Calu3 (cell line): ENCODE measurements at regions of chrX and their contacts with region 1.

Region 1: GRCh38 chrX:13223868-13224555 is 95.8 kb downstream of the ATXN3L start:
- DNase-seq: peak; percentile 50
- H3K4me3 Mint-ChIP-seq: peak overlapping the region; percentile 21
- H3K27ac Mint-ChIP-seq: peak overlapping the region; percentile 92
- H3K4me1 Mint-ChIP-seq: peaks cover 54% of the 10 kb centered on the region
- H3K27me3 Mint-ChIP-seq: no peaks in the 10 kb centered on the region
- CTCF ChIP-seq: no peak

Region 2: GRCh38 chrX:13101441-13102139 is 122.4 kb before region 1 on chrX:
- CTCF ChIA-PET with region 1: interaction called, 4 read pairs
- intact Hi-C with region 1: loop called (anchors 5 kb)
- DNase-seq: peak; percentile 78
- H3K4me3 Mint-ChIP-seq: peak overlapping the region; percentile 41
- H3K27ac Mint-ChIP-seq: peak overlapping the region; percentile 93
- H3K4me1 Mint-ChIP-seq: peaks cover 57% of the 10 kb centered on the region
- H3K27me3 Mint-ChIP-seq: no peaks in the 10 kb centered on the region
- CTCF ChIP-seq: no peak

Region 3: DNA sequence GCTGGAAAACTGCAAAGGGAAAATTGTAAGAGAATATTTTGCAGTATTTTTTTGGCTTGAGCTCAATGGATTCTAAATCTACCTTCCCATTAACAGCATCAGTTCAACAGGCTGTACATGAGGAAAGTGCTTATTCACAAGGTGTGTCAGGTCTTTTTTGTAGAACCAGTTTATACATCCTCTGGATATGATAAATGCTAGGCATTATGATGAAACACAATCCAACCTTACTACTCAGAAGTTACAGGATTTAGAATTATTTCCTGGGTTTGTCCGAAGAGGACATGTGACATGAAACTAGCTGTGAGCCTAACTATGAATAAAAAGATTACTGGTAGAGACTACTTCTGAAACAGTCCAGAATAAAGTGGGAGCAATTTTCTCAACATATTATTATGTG is 46.3 kb after region 1 on chrX:
- CTCF ChIA-PET with region 1: interaction called, 3 read pairs
- intact Hi-C with region 1: loop called (anchors 5 kb)
- DNase-seq: no peak
- H3K4me3 Mint-ChIP-seq: no peak overlapping the region
- H3K27ac Mint-ChIP-seq: no peak overlapping the region
- H3K4me1 Mint-ChIP-seq: peaks cover 11% of the 10 kb centered on the region
- H3K27me3 Mint-ChIP-seq: no peaks in the 10 kb centered on the region
- CTCF ChIP-seq: no peak